ENCODE measurements at regions of chr15 and their contacts with region 1.

Region 1: GRCh38 chr15:37824717-37825382 is 109.6 kb upstream of the TMCO5A start:
- DNase-seq: peak; percentile 98
- ATAC-seq: peak; percentile 99
- H3K4me3 ChIP-seq: no peak overlapping the region
- H3K27ac ChIP-seq: peak overlapping the region; percentile 2
- H3K4me1 ChIP-seq: peaks cover 6% of the 10 kb centered on the region
- H3K27me3 ChIP-seq: no peaks in the 10 kb centered on the region
- CTCF ChIP-seq: peak; percentile 35
- POLR2A ChIP-seq: no peak
- RAD21 ChIP-seq: peak; percentile 40; the same call in 1 of the 2 replicates

Region 2: DNA sequence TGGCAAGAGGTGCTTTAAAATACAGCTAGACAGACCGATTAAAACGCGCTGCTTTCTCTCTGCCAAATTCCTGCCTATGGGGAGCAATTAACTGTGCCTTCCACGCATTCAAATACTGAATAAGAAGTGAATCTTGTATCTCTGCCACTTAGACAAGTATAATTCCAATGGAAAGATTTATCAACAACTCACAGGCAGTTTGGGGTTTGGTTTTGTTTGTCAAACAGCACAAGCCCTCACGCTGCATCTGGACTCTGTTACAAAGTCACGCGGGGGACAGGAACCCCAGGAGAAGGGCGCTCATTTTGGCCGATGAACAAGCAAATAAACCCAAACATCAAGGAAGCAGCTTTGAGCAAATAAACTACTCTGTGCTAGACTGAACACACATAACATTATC is 47.8 kb after region 1 on chr15:
- CTCF ChIA-PET with region 1: no interaction called
- POLR2A ChIA-PET with region 1: no interaction called
- dilution Hi-C with region 1: no loop called
- in situ Hi-C with region 1: no loop called
- intact Hi-C with region 1: loop called (anchors 2 kb)
- DNase-seq: no peak
- ATAC-seq: peak; percentile 28
- H3K4me3 ChIP-seq: no peak overlapping the region
- H3K27ac ChIP-seq: no peak overlapping the region
- H3K4me1 ChIP-seq: peaks cover 10% of the 10 kb centered on the region
- H3K27me3 ChIP-seq: no peaks in the 10 kb centered on the region
- CTCF ChIP-seq: no peak
- POLR2A ChIP-seq: no peak
- RAD21 ChIP-seq: no peak

Region 3: DNA sequence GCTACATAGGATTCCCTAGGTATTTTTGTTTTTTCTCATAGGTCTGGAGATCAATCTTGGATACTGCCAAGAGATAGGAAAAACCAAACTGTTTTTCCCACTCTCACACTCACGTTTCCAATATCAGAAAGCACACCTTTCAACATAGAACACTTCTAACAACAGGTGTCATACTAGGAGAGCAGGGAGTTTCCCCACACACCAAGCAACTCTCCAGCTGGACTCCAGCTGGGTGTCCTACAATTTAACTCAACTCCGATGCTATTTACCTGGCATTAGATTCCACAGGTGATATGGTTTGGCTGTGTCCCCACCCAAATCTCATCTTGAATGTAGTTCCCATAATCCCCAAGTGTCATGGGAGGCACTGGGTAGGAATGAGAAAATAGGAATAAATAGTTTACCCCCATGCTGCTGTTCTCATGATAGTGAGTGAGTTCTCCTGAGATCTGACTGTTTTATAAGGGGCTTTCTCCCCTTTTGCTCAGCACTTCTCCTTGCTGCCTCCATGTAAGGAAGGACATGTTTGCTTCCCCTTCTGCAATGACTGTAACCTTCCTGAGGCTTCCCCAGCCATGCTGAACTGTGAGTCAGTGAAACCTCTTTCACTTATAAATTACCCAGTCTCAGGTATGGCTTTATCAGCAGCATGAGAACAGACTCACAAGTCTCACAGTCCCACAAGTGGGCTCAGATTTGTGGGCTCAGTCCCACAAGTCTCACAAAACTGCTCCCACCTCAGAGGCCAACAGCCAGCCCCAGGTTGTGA is 1401.5 kb after region 1 on chr15:
- CTCF ChIA-PET with region 1: no interaction called
- POLR2A ChIA-PET with region 1: no interaction called
- dilution Hi-C with region 1: no loop called
- in situ Hi-C with region 1: no loop called
- intact Hi-C with region 1: no loop called
- DNase-seq: no peak
- ATAC-seq: no peak
- H3K4me3 ChIP-seq: no peak overlapping the region
- H3K27ac ChIP-seq: no peak overlapping the region
- H3K4me1 ChIP-seq: peaks cover 7% of the 10 kb centered on the region
- H3K27me3 ChIP-seq: no peaks in the 10 kb centered on the region
- CTCF ChIP-seq: no peak
- POLR2A ChIP-seq: no peak
- RAD21 ChIP-seq: no peak